ENCODE measurements at regions of chr11 and their contacts with region 1.

Region 1: DNA sequence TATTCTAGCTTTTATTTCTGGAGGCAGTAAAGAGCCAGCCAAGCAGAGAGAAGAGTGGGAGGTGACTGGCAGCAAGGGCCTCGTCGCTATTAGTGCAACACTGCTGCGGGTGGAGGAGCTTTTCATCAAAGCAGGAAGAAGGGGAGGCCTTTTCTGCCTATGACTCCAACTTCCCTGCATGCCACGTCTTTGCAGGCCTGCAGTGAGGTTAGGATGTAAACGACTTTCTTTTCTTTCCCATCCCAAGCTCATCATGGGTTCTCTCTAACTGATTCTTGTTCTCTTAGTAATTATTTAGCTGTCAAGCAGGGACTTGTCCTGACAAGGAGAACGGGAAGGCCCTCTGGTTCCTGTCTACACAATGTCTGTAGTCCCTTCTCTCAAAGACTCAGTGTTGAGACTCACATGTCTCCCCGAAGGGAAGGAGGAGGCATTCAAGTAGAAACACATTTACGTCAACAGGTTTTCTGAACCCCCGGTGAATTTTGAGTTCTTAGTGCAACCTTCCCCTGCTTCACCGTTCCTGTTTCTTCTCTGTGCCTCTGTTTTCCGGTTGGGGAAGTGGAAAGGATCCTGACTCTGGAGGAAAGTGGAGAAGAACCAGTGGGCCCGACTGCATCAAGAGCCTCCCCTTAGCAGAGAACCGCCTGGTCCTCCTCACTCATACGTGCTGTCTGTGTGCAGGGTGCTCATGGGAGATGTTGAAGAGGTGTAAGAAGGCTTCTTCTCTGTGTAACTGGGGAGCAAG is 56.9 kb downstream of the PACS1 start:
- DNase-seq: peak; percentile 85
- H3K4me3 Mint-ChIP-seq: peak overlapping the region; percentile 70
- H3K27ac Mint-ChIP-seq: peak overlapping the region; percentile 96
- H3K4me1 Mint-ChIP-seq: peaks cover 49% of the 10 kb centered on the region
- H3K27me3 Mint-ChIP-seq: no peaks in the 10 kb centered on the region

Region 2: DNA sequence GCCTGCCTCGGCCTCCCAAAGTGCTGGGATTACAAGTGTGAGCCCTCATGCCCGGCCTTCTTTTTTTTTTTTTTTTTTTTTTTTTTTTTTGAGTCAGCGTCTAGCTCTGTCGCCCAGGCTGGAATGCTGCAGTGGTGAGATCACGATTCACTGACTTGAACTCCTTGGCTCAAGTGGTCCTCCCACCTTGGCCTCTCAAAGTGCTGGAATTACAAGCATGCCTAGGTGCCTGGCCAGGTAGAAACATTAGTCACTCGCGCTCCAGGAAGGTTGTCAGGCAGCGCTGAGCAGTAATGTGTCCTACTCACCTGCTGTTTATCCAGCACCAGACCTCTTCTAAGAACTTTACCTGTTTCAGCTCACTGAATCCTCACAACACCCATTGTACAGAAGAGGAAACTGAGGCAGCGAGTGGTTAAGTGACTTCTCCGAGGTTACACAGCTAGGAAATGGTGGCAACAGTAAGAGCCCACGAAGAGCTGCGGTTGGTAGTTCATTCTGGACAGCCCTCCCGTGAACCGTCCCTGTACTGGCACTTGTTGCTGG is 115.7 kb before region 1 on chr11:
- intact Hi-C with region 1: no loop called
- DNase-seq: no peak
- H3K4me3 Mint-ChIP-seq: no peak overlapping the region
- H3K27ac Mint-ChIP-seq: no peak overlapping the region
- H3K4me1 Mint-ChIP-seq: no peaks in the 10 kb centered on the region
- H3K27me3 Mint-ChIP-seq: peaks cover 21% of the 10 kb centered on the region

Region 3: DNA sequence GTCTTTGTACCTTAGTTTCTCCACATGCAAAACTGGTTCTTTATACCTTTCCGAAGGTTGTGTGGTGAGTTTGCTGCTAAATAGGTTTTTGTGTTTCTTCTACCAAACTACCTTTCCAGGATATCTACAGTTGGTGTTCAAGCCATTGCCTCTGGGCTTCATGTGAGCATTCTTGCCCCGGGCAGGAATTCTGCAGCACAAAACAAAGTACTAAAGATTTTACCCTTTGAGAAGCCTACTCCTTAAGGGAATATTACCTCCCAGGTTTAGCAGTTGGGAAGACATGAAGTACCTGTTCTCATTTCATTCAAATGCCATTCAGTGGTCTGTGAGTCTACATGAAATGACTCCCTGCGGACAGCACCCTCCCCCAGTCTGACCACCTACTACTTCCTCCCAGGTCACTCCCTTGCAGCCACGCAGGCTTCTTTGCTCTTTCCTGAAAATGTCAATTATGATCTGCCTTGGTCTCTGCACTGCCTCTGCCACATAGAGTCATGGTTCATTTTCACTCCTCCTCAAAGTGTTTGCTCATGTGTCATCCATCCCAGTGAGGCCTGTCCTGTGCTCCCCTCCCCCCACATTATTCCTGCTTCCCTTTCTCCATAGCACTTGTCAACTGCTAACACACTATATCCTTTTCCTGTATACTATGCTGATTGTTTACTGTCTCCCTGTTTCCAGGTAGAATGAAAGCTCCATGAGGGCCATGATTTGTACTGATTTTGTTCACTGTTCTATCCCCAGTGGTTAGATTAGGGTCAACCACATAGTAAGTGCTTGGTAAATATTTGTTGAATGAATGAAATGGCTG is 20.0 kb before region 1 on chr11:
- intact Hi-C with region 1: loop called (anchors 1 kb)
- DNase-seq: no peak
- H3K4me3 Mint-ChIP-seq: peak overlapping the region; percentile 41
- H3K27ac Mint-ChIP-seq: peak overlapping the region; percentile 82
- H3K4me1 Mint-ChIP-seq: peaks cover 62% of the 10 kb centered on the region
- H3K27me3 Mint-ChIP-seq: no peaks in the 10 kb centered on the region

Region 4: DNA sequence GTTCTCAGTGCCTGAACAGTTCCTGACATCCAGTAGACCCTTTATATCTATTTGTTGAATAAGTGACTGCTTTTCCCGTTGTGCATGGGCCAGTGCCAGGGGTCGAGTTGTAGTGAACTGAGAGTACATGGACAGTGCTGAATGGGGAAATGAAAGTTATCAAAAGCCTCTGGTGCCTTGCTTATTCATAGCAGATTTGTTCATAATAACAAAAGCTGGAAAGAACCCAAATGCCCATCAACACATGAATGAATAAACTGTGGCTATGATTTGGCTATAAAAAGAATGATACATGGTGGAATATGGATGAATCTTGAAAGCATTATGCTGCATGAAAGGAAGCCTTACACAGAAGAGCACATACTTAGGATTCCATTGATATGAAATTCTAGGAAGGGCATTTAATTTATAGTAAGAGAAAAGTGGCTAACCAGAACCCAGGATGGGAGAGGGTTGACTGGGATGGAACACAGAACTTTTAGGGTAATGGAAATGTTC is 14.3 kb before region 1 on chr11:
- intact Hi-C with region 1: loop called (anchors 1 kb)
- DNase-seq: no peak
- H3K4me3 Mint-ChIP-seq: peak overlapping the region; percentile 32
- H3K27ac Mint-ChIP-seq: peak overlapping the region; percentile 79
- H3K4me1 Mint-ChIP-seq: peaks cover 71% of the 10 kb centered on the region
- H3K27me3 Mint-ChIP-seq: no peaks in the 10 kb centered on the region

Region 5: DNA sequence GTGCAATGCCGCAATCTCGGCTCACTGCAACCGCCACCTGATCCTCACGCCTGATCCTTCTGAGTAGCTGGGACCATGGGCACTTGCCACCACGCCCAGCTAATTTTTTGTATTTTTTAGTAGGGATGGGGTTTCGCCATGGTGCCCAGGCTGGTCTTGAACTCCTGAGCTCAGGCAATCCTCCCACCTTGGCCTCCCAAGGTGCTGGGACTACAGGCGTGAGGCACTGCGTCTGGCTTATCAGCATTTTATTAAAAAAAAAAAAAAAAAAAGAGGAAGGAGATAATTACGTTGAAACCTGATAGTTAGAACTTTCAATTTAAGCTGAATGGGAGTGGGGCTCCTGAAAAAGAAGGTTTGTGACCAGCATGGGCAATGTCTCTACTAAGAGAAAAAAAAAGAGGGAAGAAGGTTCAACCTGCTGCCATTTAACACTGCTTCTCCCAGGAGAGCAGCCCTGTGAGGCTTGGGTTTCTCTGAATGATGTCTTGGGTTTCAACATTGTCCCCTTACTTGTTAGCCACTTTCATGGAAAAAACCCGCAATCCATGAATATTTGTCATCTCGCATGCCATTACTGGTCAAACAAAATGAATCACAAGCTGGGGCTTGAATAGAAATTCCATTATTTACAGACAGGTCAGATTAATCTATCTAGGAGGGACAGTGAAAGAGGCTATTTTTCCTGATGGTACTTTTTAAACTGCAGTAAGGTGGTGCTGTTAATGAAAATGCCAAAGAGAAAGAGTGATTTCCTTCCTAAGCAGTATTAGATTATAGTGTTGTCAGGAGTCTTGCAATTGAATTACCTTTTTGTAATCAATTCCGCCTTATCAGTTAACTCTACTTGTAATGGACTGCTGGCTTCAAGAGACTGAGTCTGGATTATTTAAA is 15.6 kb after region 1 on chr11:
- intact Hi-C with region 1: no loop called
- DNase-seq: no peak
- H3K4me3 Mint-ChIP-seq: no peak overlapping the region
- H3K27ac Mint-ChIP-seq: no peak overlapping the region
- H3K4me1 Mint-ChIP-seq: peaks cover 20% of the 10 kb centered on the region
- H3K27me3 Mint-ChIP-seq: no peaks in the 10 kb centered on the region